Motor neuron (in vitro differentiated cells): ENCODE measurements at regions of chr16 and their contacts with region 1.

Region 1: GRCh38 chr16:50368410-50369132 is at the start of gene BRD7:
- ATAC-seq: peak; percentile 77 to 91 (median 81)
- H3K4me3 ChIP-seq: peak within 1 kb of the TSS; percentile 67 to 100 (median 93)
- H3K27ac ChIP-seq: peak within 1 kb of the TSS; percentile 51 to 58
- H3K4me1 ChIP-seq: peaks cover 8 to 13% of the 10 kb centered on the region in 2 donors
- total RNA-seq, gene BRD7: 32.5 to 85.4 (median 55.8) TPM

Region 2: GRCh38 chr16:49588729-49589384 is 779.7 kb before region 1 on chr16:
- in situ Hi-C with region 1: no loop called
- ATAC-seq: peak in 2 of 8 experiments; percentile 9 to 11
- H3K4me3 ChIP-seq: no peak overlapping the region
- H3K27ac ChIP-seq: peak overlapping the region in 1 of 2 donors; percentile 21
- H3K4me1 ChIP-seq: peaks cover 40 to 56% of the 10 kb centered on the region in 2 donors

Region 3: GRCh38 chr16:50665128-50665878 is 296.7 kb after region 1 on chr16:
- in situ Hi-C with region 1: loop called in 1 of 9 experiments (anchors 25 kb)
- ATAC-seq: peak; percentile 57 to 97 (median 75)
- H3K4me3 ChIP-seq: no peak overlapping the region
- H3K27ac ChIP-seq: no peak overlapping the region
- H3K4me1 ChIP-seq: peaks cover 0 to 9% of the 10 kb centered on the region in 2 donors

Region 4: GRCh38 chr16:50806099-50807062 is 437.8 kb after region 1 on chr16:
- in situ Hi-C with region 1: loop called in 1 of 9 experiments (anchors 25 kb)
- ATAC-seq: peak; percentile 95 to 97 (median 96)
- H3K4me3 ChIP-seq: peak overlapping the region; percentile 28 to 40 (median 30)
- H3K27ac ChIP-seq: no peak overlapping the region
- H3K4me1 ChIP-seq: no peaks in the 10 kb centered on the region